GM12878 (cell line): ENCODE measurements at regions of chr11 and their contacts with region 1.

Region 1: GRCh38 chr11:78564490-78565467 is 9.9 kb downstream of the NARS2 start:
- DNase-seq: peak; percentile 40
- ATAC-seq: peak; percentile 67
- H3K4me3 ChIP-seq: no peak overlapping the region
- H3K27ac ChIP-seq: no peak overlapping the region
- H3K4me1 ChIP-seq: peaks cover 33% of the 10 kb centered on the region
- H3K27me3 ChIP-seq: no peaks in the 10 kb centered on the region
- CTCF ChIP-seq: peak; percentile 49 to 67 (median 54)
- EP300 ChIP-seq: no peak
- POLR2A ChIP-seq: no peak
- RAD21 ChIP-seq: peak; percentile 89

Region 2: DNA sequence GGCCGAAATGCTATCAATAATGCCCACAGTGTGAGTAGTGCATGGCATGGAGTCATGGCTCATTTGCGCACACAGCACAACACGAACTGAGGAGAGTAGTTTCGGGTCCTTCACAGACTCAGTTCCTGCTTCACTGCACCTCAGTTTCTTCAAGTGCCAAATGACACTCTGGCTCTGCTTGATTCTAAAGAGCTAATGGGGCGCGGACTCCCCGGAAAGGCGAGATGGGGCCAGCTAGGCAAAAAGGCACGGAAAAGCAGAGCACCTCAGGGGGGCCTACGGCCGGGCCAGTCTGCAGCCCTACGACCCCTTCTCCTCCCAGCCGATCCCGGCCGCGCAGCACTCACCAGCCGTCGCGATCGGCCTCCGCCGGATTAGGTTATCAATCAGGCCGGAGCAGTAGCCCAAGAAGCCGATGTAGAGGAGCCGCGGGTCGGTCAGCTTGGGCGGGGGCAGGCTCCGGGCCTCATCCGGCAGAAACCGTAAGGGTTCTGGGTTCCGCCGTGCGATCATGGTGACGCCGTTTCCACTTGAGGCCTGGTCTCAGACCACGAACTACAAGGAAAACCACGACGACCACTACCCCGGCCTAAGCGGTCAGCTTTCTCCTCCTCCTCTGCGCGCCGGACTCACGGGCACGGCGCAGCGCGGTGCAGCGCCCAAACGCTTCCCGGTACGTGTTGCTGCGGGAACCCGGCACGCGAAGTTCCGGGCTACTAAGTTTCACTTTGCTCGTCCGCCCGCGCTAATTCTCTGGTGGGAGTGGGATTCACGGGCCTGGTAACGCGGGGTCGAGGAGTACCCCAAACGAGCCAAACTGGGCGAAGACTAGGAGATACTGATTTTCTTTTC is 485.3 kb before region 1 on chr11 and contains the start of gene NDUFC2:
- CTCF ChIA-PET with region 1: interaction called, 7 read pairs
- POLR2A ChIA-PET with region 1: no interaction called
- RAD21 ChIA-PET with region 1: interaction called, 7 read pairs
- SMC1A ChIA-PET with region 1: interaction called, 4 read pairs
- in situ Hi-C with region 1: no loop called
- intact Hi-C with region 1: loop called (anchors 5 kb)
- DNase-seq: peak; percentile 39
- ATAC-seq: peak; percentile 87
- H3K4me3 ChIP-seq: peak within 1 kb of the TSS; percentile 74
- H3K27ac ChIP-seq: peak within 1 kb of the TSS; percentile 75
- H3K4me1 ChIP-seq: peaks cover 4% of the 10 kb centered on the region
- H3K27me3 ChIP-seq: no peaks in the 10 kb centered on the region
- CTCF ChIP-seq: no peak
- EP300 ChIP-seq: no peak; a peak in 1 of 4 replicates
- POLR2A ChIP-seq: peak; percentile 89
- RAD21 ChIP-seq: no peak
- polyA plus RNA-seq, gene NDUFC2: 483 to 529 TPM

Region 3: GRCh38 chr11:78223320-78223954 is 341.3 kb before region 1 on chr11:
- CTCF ChIA-PET with region 1: interaction called, 181 read pairs
- POLR2A ChIA-PET with region 1: interaction called, 4 read pairs
- RAD21 ChIA-PET with region 1: interaction called, 124 read pairs
- SMC1A ChIA-PET with region 1: interaction called, 89 read pairs
- in situ Hi-C with region 1: loop called (anchors 5 kb)
- intact Hi-C with region 1: loop called (anchors 1 kb)
- DNase-seq: peak; percentile 62
- ATAC-seq: peak; percentile 90
- H3K4me3 ChIP-seq: no peak overlapping the region; the same call in 1 of the 2 replicates
- H3K27ac ChIP-seq: peak overlapping the region; percentile 76
- H3K4me1 ChIP-seq: peaks cover 58% of the 10 kb centered on the region
- H3K27me3 ChIP-seq: no peaks in the 10 kb centered on the region
- CTCF ChIP-seq: no peak
- EP300 ChIP-seq: peak in 1 of 2 experiments; percentile 64; a peak in 1 of 4 replicates
- POLR2A ChIP-seq: no peak
- RAD21 ChIP-seq: no peak

Region 4: DNA sequence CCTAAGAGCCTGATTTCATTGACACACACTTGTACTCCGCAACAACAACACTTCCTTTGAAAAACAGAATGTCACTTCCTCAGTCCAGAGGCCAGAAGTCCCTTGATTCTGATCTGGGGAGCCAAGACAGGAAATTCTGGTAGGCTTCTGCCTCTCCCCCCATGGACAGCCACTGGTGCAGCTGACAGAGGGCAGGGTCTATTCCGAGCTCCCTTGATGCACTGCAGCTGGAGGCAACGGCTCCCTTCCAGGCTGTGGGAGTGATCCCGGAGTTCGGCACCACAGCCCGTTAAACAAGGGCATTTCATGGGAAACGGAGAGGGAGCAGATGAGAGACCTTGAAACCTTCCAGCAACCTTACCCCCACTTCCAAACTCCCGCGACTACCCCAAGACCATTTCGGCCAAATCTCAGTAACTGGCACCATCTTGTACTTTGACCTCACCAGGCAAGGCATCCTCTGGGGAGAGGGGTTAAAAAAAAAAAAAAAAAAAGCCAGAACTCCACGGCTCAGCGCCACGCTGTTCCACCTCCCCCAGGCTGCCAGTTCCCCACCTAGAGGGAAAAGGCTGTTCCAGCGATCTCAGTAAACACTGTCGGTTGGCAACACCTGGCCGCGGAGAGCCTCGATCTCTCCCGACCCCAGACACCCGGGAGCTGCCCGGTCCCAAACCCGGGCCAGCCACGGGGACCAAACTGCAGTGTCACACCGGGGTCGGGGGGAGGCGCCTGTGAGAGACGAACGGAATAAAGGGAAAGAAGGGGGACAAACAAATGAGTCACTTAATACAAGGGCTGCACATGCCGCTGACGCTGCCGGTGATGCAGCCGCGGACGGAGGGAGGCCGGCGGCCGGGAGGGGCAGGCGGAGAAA is 148.2 kb before region 1 on chr11:
- CTCF ChIA-PET with region 1: interaction called, 280 read pairs
- POLR2A ChIA-PET with region 1: interaction called, 15 read pairs
- RAD21 ChIA-PET with region 1: interaction called, 137 read pairs
- SMC1A ChIA-PET with region 1: interaction called, 108 read pairs
- in situ Hi-C with region 1: loop called (anchors 5 kb)
- intact Hi-C with region 1: loop called (anchors 1 kb)
- DNase-seq: no peak
- ATAC-seq: peak; percentile 63
- H3K4me3 ChIP-seq: peak overlapping the region; percentile 74
- H3K27ac ChIP-seq: peak overlapping the region; percentile 56
- H3K4me1 ChIP-seq: peaks cover 22% of the 10 kb centered on the region
- H3K27me3 ChIP-seq: no peaks in the 10 kb centered on the region
- CTCF ChIP-seq: peak; percentile 72 to 75 (median 72)
- EP300 ChIP-seq: no peak
- POLR2A ChIP-seq: peak; percentile 62; the same call in 1 of the 2 replicates
- RAD21 ChIP-seq: peak; percentile 72

Region 5: DNA sequence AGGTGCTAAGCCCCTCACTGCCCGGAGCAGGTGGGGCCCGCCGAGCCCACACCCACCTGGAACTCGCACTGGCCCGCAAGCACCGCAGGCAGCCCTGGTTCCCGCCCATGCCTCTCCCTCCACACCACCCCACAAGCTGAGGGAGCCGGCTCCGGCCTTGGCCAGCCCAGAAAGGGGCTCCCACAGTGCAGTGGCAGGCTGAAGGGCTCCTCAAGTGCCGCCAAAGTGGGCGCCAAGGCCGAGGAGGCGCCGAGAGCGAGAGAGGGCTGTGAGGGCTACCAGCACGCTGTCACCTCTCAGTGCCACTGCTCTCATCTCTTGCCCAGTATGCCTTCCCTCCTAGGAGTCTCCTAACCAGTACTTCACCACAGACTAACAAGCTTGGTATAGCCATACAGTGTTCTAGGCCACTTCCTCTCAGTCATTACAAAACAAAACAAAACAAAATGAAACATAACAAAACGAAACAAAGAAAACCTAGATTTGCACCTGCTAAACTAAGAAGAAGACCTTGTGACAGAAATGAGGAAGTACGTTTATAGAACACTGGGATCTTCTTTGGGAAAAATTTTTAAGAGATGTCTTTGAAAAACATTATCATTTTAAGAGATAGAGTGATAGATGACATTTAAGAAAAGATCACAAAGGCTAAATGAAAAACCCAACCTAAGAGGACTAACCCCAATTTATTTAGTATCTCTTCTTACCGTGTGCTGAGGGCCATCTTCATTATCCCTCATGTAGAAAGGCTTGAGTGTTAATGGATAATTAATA is 99.4 kb before region 1 on chr11:
- CTCF ChIA-PET with region 1: interaction called, 14 read pairs
- POLR2A ChIA-PET with region 1: no interaction called
- RAD21 ChIA-PET with region 1: interaction called, 8 read pairs
- SMC1A ChIA-PET with region 1: interaction called, 5 read pairs
- in situ Hi-C with region 1: no loop called
- intact Hi-C with region 1: loop called (anchors 10 kb)
- DNase-seq: peak; percentile 93
- ATAC-seq: peak; percentile 100
- H3K4me3 ChIP-seq: peak overlapping the region; percentile 35; the same call in 1 of the 2 replicates
- H3K27ac ChIP-seq: peak overlapping the region; percentile 90
- H3K4me1 ChIP-seq: peaks cover 26% of the 10 kb centered on the region
- H3K27me3 ChIP-seq: no peaks in the 10 kb centered on the region
- CTCF ChIP-seq: no peak
- EP300 ChIP-seq: peak; percentile 63 to 84
- POLR2A ChIP-seq: peak; percentile 78
- RAD21 ChIP-seq: no peak

Region 6: DNA sequence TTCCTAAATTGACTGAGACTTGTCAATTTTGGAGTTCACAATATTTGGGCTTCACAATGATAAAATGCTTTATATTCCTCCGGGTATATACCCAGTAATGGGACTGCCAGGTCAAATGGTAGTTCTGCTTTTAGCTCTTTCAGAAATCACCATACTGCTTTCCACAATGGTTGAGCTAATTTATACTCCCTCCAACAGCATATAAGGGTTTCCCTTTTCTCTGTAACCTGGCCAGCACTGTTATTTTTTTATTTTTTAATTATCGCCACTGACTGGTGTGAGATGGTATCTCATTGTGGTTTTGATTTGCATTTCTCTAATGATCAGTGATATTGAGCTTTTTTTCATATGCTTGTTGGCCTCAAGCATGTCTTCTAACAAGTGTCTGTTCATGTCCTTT is 11.9 kb before region 1 on chr11:
- CTCF ChIA-PET with region 1: interaction called, 19 read pairs
- POLR2A ChIA-PET with region 1: no interaction called
- RAD21 ChIA-PET with region 1: interaction called, 6 read pairs
- SMC1A ChIA-PET with region 1: interaction called, 9 read pairs
- in situ Hi-C with region 1: no loop called
- intact Hi-C with region 1: no loop called
- DNase-seq: no peak
- ATAC-seq: no peak
- H3K4me3 ChIP-seq: no peak overlapping the region
- H3K27ac ChIP-seq: no peak overlapping the region
- H3K4me1 ChIP-seq: no peaks in the 10 kb centered on the region
- H3K27me3 ChIP-seq: no peaks in the 10 kb centered on the region
- CTCF ChIP-seq: no peak
- EP300 ChIP-seq: no peak
- POLR2A ChIP-seq: no peak
- RAD21 ChIP-seq: no peak